PC-9 (cell line): ENCODE measurements at regions of chr2 and their contacts with region 1.

Region 1: GRCh38 chr2:18578033-18578432 is 11.3 kb downstream of the NT5C1B start:
- DNase-seq: no peak
- H3K4me3 ChIP-seq: no peak overlapping the region
- H3K27ac ChIP-seq: no peak overlapping the region
- H3K4me1 ChIP-seq: no peaks in the 10 kb centered on the region
- H3K27me3 ChIP-seq: no peaks in the 10 kb centered on the region
- CTCF ChIP-seq: no peak

Region 2: DNA sequence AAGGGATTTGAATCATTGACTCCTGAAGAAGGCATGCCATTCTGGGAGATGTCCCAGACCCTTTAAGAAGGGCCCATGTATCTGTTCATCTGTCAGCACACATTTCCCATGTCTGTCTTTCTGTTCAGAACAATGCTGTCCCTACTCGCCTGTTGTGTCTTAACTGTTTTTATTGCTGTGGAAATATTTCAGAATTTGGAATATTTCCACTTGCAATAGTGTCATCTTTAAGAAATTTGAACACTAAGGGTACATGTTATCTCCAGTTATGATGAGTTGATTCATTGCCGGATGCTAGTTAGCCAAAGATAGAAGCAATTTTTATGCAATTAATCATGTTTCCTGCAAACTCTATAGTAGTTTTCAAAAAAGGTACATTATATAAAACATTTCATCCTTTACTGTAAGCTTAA is 48.2 kb after region 1 on chr2:
- CTCF ChIA-PET with region 1: no interaction called
- POLR2A ChIA-PET with region 1: interaction called, 15 read pairs
- intact Hi-C with region 1: no loop called
- DNase-seq: no peak
- H3K4me3 ChIP-seq: no peak overlapping the region
- H3K27ac ChIP-seq: no peak overlapping the region
- H3K4me1 ChIP-seq: peaks cover 21% of the 10 kb centered on the region
- H3K27me3 ChIP-seq: no peaks in the 10 kb centered on the region
- CTCF ChIP-seq: no peak

Region 3: DNA sequence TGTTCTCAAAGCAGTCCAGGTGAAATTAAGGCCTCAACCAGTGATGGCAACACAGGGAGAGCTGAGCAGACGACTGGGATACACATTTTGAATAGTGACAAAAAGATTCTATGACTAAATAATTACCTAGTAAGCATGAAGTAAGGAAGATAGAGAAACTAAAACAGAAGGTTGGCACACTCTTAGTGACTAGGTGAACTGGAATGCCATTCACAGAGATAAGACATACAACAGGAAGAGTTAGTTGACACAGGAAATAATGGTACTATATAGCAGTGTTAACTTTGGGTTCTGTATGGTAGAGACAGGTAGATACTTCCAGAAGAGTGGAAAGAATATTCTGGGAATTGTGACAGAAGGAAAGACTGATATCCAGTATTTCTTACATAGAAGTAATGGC is 193.2 kb after region 1 on chr2:
- CTCF ChIA-PET with region 1: no interaction called
- POLR2A ChIA-PET with region 1: no interaction called
- intact Hi-C with region 1: no loop called
- DNase-seq: peak in 1 of 2 experiments; percentile 62
- H3K4me3 ChIP-seq: no peak overlapping the region
- H3K27ac ChIP-seq: no peak overlapping the region
- H3K4me1 ChIP-seq: peaks cover 8% of the 10 kb centered on the region; the same call in 1 of the 2 replicates
- H3K27me3 ChIP-seq: no peaks in the 10 kb centered on the region
- CTCF ChIP-seq: no peak